Cardiac septum (tissue), 1 donor: ENCODE measurements at regions of chr10 and their contacts with region 1.

Region 1: DNA sequence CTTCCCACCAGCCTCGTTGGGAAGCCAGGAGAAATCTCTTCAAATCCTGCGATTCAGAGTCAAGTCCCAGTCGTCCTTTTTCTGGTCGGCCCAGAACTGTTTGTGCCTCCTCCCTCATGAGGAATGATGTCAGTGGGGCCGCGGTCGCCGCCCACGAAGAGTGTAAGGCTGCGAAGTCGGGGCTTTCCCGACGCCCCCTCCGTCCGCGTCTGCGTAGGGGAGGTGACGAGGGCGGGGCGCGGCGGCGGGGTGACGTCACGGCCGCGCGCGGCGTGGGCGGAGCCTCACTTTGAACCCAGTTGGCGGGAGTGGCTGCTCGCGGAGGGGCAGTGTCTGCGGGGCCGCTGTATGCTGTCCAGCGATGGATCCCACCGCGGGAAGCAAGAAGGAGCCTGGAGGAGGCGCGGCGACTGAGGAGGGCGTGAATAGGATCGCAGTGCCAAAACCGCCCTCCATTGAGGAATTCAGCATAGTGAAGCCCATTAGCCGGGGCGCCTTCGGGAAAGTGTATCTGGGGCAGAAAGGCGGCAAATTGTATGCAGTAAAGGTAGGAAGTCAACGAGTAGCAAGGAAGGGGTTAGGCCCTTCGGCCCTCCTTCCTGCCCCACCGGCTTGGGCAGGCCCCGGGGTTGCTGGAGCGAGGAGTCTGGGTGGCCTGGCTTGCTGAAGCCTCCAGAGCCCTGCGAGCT is at the start of gene MASTL:
- DNase-seq: peak; percentile 95
- total RNA-seq, gene MASTL: 1.8 TPM

Region 2: GRCh38 chr10:27099916-27100812 is 55.0 kb before region 1 on chr10 and contains the start of gene ANKRD26:
- intact Hi-C with region 1: loop called (anchors 2 kb)
- DNase-seq: peak; percentile 98
- total RNA-seq, gene ANKRD26: 9.1 TPM

Region 3: DNA sequence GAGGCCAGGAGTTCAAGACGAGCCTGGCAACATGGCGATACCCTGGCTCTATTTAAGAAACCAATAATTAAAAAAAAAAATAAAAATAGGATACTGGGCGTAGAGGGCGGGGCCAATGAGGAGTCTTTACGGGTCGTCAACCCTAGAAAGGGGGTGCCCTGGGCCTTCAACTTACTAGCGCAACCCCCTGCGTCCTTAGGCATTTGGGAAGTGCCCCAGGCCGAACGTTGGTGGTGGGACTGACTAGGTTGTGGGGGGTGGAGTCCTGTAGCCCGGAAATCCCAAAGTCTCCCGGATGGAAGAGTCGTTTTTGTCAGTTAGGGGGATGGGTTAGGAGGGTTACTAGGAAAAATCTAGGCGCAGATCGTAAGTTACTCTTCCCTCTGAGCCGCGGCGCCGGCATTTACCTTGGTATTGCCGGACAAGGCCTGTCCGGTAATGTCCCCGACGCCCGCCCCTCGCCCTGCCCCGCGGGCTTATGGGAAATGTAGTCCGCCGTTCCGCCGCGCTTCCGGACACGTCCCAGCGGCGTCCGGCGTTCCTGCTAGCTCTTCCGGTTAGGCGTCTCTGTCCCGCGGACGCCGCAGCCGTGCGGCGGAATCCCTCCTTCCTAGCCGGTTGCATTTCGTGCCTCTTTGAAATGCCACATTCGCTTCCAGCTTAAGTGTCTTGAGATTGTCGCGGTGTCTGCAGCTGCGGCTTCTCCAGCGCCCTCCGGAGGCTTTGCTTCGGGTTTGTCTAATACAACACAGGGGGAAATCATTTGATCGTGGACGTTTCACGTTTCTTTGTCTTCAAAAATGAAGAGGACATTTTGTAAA is 86.7 kb after region 1 on chr10:
- intact Hi-C with region 1: loop called (anchors 2 kb)
- DNase-seq: peak; percentile 97